ENCODE measurements at regions of chr22 and their contacts with region 1.

Region 1: DNA sequence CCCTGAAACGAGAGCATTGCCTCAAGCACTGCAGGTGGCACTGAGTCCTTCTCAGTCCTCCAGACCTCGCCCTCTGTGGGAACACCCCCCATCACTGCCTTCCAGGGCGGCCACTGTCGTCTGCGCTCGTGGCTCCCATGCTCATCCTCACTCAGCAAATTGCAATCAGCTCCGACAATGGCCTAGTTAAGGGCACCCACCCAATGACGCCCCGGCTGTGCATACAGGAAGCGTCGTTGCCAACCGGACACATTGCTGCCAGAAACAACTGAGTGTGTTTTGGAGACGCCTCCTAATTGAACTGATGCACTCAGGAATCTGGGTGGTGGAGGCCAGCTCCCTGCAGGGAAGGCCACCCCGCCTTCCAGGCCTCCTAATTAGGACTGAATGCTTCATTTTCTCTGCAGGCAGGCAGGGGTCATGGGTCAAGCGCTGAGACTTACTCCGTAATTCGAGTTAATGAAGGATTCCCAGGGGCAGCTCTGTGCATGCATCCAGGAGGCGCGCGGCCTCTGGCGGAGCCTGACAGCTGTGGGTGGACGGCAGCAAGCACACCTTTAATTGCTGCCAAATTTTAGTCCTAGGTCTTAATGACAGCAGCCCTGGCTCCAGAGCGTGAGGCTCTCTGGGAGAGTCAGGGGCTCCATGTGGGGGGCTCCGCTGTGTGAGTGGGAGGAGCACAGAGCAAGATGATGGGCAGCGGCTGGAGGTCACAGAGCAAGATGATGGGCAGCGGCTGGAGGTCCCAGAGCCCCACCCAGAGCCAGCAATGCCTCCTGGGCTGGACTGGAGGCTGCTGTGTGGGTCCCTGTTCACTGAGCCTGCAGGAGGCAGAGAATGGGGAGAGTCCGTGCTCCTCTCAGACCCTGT is 199.0 kb downstream of the BRD1 start:
- DNase-seq: no peak
- ATAC-seq: no peak
- H3K4me3 ChIP-seq: no peak overlapping the region
- H3K27ac ChIP-seq: no peak overlapping the region
- H3K4me1 ChIP-seq: no peaks in the 10 kb centered on the region
- H3K27me3 ChIP-seq: no peaks in the 10 kb centered on the region
- CTCF ChIP-seq: no peak

Region 2: DNA sequence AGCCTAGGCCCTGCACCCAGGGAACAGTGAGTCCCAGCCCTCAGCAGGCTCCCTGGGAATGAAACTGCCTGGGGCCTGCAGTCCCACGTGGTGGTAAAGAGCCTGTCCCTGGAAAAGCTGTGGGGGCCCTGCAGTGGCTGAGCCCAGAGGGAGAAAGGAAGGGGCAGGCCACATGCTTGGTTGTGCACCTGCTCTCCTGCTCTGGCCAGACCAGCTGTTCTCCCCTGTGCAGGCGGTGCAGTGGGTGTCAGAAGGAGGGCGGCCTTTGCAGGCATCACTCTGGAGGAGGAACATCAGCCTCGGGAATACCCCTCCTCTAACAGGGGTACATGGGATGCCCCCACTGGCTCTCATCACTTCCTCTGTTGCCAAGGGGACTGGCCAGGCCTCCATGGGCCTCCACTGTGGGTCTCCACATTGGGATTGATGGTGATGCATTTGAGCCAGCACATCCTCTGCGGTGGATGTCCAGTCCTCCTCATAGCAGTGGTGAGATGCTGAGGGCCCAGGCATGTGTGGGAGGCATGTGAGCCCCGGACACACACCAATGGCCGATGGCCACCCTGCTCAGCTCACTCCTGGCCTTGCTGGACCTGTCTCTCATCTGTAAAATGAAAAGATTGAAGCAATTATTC is 491.3 kb before region 1 on chr22:
- CTCF ChIA-PET with region 1: no interaction called
- POLR2A ChIA-PET with region 1: interaction called, 12 read pairs
- in situ Hi-C with region 1: no loop called
- intact Hi-C with region 1: no loop called
- DNase-seq: no peak
- ATAC-seq: no peak
- H3K4me3 ChIP-seq: no peak overlapping the region
- H3K27ac ChIP-seq: no peak overlapping the region
- H3K4me1 ChIP-seq: no peaks in the 10 kb centered on the region
- H3K27me3 ChIP-seq: no peaks in the 10 kb centered on the region; the same call in 1 of the 2 replicates
- CTCF ChIP-seq: no peak

Region 3: DNA sequence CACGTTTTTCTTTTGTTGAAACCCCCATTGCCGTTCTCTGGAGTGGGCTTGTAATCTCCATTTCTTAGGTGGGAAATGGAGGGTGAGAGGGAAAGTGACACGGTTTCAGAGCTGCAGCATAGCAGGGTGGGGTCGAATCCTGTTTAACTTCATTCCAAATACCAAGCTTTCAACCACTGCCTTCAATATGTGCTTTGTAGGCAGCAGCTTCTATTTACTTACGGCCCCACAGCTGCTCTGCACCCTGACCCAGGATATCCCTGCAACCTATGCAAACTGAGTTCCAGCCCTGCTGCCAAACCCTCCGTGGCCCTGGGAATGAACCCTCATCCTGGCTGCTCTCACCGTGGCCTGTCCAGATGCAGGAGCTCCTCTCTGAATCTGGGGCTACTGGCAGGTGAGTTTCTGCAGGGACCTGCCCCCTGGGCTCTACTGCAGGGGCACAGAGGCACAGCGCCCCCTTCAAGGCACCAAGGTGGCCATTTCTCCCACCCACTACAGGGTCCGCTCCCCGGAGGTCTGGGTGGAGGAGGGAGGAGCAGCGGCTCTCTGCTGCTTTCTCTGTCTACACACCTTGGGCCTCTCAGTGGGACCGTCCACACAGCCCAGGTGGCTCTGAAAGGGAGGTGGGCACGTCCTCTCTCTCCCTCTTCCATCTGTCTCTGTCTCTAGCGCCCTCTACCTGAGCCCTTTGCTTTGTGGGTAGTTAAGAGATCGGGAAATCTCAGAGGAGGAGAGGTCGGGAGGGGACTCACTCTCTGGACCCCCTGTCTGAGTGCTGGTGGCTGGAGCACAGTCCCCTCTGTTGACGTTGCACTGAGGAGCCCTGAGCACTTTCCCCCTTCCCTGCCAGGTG is 80.0 kb before region 1 on chr22:
- CTCF ChIA-PET with region 1: no interaction called
- POLR2A ChIA-PET with region 1: no interaction called
- in situ Hi-C with region 1: no loop called
- intact Hi-C with region 1: no loop called
- DNase-seq: no peak
- ATAC-seq: no peak
- H3K4me3 ChIP-seq: no peak overlapping the region
- H3K27ac ChIP-seq: no peak overlapping the region
- H3K4me1 ChIP-seq: no peaks in the 10 kb centered on the region
- H3K27me3 ChIP-seq: no peaks in the 10 kb centered on the region; the same call in 1 of the 2 replicates
- CTCF ChIP-seq: no peak